Activated CD8-positive, alpha-beta T cell treated with anti-CD3 and anti-CD28 coated beads, Interleukin-2, amount 10 ng/mL, durations not matched to agents 7 days and 5 days (primary cell): ENCODE measurements at regions of chr4 and their contacts with region 1.

Region 1: DNA sequence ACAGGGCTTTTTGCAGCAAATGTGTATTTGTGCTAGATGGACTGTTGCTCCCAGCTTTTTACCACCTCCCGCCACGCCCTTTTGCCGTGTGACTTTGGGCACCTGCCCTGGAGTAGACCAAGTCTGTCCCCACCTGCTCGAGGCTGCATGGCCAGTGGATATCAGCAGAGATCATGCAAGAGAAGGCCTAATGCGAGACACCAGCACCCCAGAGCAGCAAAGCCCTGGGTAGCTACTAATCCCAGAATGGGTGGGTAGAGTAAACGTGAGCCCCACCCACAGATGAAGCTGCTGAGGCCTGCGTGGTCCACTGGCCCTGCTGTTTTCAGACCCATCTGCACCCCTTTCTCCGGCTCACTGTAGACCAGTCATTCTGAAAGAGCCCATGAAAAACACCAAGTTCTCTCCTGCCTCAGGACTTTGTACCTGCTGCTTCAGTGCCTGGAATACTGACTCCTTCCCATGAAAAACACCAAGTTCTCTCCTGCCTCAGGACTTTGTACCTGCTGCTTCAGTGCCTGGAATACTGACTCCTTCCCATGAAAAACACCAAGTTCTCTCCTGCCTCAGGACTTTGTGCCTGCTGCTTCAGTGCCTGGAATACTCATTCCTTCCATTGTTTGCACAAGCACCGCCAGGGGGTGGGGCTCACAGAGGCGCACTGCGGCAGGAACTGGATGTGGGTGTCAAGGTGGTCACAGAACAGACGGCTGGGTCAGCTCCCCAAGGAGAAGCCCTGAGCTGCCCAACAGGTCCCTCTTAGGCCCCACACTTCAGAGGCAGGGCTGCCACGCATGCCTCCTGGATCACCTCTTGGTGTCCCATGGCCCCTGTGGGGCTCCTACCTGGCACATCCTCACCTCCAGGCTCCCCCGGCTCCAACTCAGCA is 5.1 kb upstream of the TNIP2 start:
- DNase-seq: peak; percentile 57
- ATAC-seq: peak; percentile 9
- H3K4me3 Mint-ChIP-seq: no peak overlapping the region
- H3K27ac Mint-ChIP-seq: peak overlapping the region; percentile 52
- H3K4me1 Mint-ChIP-seq: peaks cover 36% of the 10 kb centered on the region
- H3K27me3 Mint-ChIP-seq: no peaks in the 10 kb centered on the region

Region 2: DNA sequence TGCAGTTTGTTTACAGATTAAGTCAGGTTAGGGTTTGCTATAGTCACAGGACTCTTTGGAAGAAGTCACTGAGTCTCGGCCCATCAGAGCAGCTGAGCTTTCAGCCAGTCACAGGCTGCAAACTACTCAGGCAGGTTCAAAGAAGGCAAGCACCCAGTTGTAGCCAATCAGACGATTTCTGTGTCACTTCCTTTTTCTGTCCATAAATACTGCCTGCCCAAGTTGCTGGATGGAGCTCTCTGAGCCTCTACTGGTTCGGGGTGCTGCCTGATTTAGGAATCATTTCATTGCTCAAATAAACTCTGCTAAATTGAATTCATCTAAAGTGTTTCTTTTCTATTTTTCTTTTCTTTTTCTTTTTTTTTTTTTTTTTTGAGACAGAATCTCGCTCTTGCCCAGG is 24.3 kb after region 1 on chr4:
- CTCF ChIA-PET with region 1: interaction called, 10 read pairs
- POLR2A ChIA-PET with region 1: no interaction called
- DNase-seq: peak; percentile 54
- ATAC-seq: peak; percentile 61
- H3K4me3 Mint-ChIP-seq: no peak overlapping the region
- H3K27ac Mint-ChIP-seq: no peak overlapping the region
- H3K4me1 Mint-ChIP-seq: peaks cover 37% of the 10 kb centered on the region
- H3K27me3 Mint-ChIP-seq: peaks cover 8% of the 10 kb centered on the region

Region 3: GRCh38 chr4:2948895-2949765 is 187.9 kb after region 1 on chr4:
- CTCF ChIA-PET with region 1: interaction called, 29 read pairs
- POLR2A ChIA-PET with region 1: no interaction called
- DNase-seq: peak; percentile 47
- ATAC-seq: no peak
- H3K4me3 Mint-ChIP-seq: no peak overlapping the region
- H3K27ac Mint-ChIP-seq: no peak overlapping the region
- H3K4me1 Mint-ChIP-seq: peaks cover 5% of the 10 kb centered on the region
- H3K27me3 Mint-ChIP-seq: no peaks in the 10 kb centered on the region

Region 4: GRCh38 chr4:2954358-2955185 is 193.3 kb after region 1 on chr4:
- CTCF ChIA-PET with region 1: interaction called, 29 read pairs
- POLR2A ChIA-PET with region 1: no interaction called
- DNase-seq: peak; percentile 53
- ATAC-seq: peak; percentile 67
- H3K4me3 Mint-ChIP-seq: no peak overlapping the region
- H3K27ac Mint-ChIP-seq: peak overlapping the region; percentile 89
- H3K4me1 Mint-ChIP-seq: peaks cover 47% of the 10 kb centered on the region
- H3K27me3 Mint-ChIP-seq: no peaks in the 10 kb centered on the region

Region 5: GRCh38 chr4:2963175-2963965 is 202.1 kb after region 1 on chr4 and contains the starts of genes GRK4 and NOP14:
- CTCF ChIA-PET with region 1: interaction called, 22 read pairs
- POLR2A ChIA-PET with region 1: interaction called, 3 read pairs
- DNase-seq: peak; percentile 99
- ATAC-seq: peak; percentile 83
- H3K4me3 Mint-ChIP-seq: peak within 1 kb of the TSS; percentile 74
- H3K27ac Mint-ChIP-seq: peak within 1 kb of the TSS; percentile 95
- H3K4me1 Mint-ChIP-seq: peaks cover 38% of the 10 kb centered on the region
- H3K27me3 Mint-ChIP-seq: no peaks in the 10 kb centered on the region
- total RNA-seq, gene GRK4: 2.2 to 2.6 TPM
- total RNA-seq, gene NOP14: 47.6 to 52.3 TPM